Endothelial cell of umbilical vein (primary cell): ENCODE measurements at regions of chr2 and their contacts with region 1.

Region 1: DNA sequence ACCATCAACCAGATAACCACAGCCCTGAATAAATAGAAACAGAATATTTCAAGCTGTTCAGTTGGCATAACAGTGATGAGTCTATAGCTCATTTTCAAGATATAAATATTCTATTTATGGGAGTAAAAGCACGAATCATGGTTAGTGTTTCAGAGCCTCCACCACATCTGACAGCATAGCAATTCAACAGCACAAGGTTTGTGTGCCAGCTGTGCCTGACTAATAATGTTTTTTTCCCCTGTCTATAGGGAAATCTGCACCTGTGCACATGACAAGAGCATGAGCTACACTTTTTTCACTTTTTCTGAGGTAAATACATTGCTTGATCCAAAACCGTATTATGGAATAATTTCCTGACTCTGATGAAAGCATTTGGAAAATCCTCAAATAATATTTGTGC is 251.3 kb downstream of the RPIA start:
- DNase-seq: no peak
- H3K4me3 ChIP-seq: no peak overlapping the region
- H3K27ac ChIP-seq: no peak overlapping the region
- H3K4me1 ChIP-seq: no peaks in the 10 kb centered on the region
- H3K27me3 ChIP-seq: peaks cover 0 to 2% of the 10 kb centered on the region in 2 experiments
- CTCF ChIP-seq: no peak
- POLR2A ChIP-seq: no peak

Region 2: DNA sequence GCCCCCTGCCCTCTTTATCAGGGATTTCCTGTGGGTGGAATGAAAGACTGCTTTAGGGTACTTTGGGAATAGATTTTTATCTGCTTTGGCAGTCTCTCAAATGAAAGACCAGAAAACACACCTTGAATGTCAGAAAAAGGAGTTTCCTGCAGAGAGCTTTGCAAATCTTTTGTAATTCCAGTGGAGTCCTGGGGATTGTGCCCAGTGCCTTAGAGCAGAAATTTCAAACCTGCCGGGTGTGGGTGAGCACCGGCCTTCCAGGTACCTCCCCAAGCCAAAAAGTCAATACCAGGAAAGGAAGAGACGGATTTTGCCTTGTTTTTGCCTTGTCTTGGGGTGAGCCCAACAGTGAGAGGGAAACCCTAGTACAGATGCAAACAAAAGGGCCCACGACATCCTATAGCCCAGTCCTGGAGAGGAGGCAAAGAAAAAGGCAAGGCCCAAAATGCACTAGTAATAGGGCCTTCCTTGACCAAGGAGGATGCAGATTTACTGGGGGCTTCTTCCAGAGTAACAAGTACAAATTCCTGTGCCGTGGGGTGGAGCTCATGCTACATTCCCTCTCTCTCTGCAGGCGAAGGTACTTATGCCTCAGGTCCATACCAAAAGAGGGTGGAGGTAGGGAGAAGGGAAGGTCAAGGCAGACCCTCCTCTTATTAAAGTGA is 526.6 kb before region 1 on chr2:
- CTCF ChIA-PET with region 1: no interaction called
- POLR2A ChIA-PET with region 1: no interaction called
- dilution Hi-C with region 1: no loop called
- intact Hi-C with region 1: no loop called
- DNase-seq: no peak
- H3K4me3 ChIP-seq: no peak overlapping the region
- H3K27ac ChIP-seq: no peak overlapping the region
- H3K4me1 ChIP-seq: no peaks in the 10 kb centered on the region
- H3K27me3 ChIP-seq: no peaks in the 10 kb centered on the region
- CTCF ChIP-seq: no peak
- POLR2A ChIP-seq: no peak

Region 3: DNA sequence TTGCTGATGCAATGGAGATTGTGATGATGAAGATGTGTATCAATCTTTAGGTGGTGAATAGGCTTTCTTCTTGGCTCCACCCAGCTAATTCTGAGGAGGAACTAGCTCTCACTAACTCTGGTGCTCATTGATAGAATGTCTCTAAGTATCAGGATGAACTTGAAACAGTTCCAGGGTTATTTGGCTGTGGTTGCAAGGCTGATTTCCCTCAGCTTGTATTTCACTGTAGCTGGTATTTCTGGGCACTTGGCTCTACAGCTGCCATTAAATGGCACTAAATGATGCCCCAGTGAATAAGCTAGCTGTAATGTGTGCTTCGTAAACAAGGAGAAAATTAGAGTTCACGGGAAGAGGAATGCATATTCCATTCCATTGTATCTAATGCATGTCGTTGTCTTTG is 10.1 kb before region 1 on chr2:
- CTCF ChIA-PET with region 1: interaction called, 11 read pairs
- POLR2A ChIA-PET with region 1: no interaction called
- dilution Hi-C with region 1: no loop called
- intact Hi-C with region 1: no loop called
- DNase-seq: no peak
- H3K4me3 ChIP-seq: no peak overlapping the region
- H3K27ac ChIP-seq: no peak overlapping the region
- H3K4me1 ChIP-seq: no peaks in the 10 kb centered on the region
- H3K27me3 ChIP-seq: peaks cover 3 to 8% of the 10 kb centered on the region in 2 experiments
- CTCF ChIP-seq: no peak
- POLR2A ChIP-seq: no peak